MCF 10A (cell line): ENCODE measurements at regions of chr7 and their contacts with region 1.

Region 1: DNA sequence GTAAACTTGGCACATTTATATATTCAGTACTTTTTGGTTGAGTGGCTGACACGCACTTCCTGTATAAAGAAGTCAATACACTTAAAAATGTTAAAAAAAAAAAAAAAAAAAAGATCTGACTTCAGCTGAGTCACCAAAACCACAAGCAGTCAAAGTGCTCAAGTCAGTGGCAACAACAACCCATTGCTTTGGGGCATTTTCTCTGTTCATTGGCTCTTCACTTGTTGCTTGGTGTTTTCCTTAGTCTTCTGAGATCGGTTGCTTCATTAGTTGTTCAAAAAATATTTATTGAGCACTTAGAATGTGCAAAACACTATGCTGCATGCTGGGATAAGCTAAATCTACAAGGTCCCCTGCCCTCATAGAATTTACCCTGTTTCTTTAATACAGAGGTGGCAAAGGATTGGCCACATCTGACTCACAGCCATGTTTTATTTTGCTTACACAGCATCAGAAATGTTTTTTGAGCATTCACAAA is 63.7 kb downstream of the ZNRF2 start:
- DNase-seq: peak; percentile 95
- H3K4me3 Mint-ChIP-seq: peak overlapping the region; percentile 63
- H3K27ac Mint-ChIP-seq: peak overlapping the region; percentile 93
- H3K4me1 Mint-ChIP-seq: peaks cover 43% of the 10 kb centered on the region
- H3K27me3 Mint-ChIP-seq: no peaks in the 10 kb centered on the region
- CTCF ChIP-seq: no peak

Region 2: GRCh38 chr7:30134611-30135545 is 213.2 kb before region 1 on chr7 and contains the start of gene MTURN:
- CTCF ChIA-PET with region 1: no interaction called
- POLR2A ChIA-PET with region 1: interaction called, 12 read pairs
- intact Hi-C with region 1: no loop called
- DNase-seq: peak; percentile 75
- H3K4me3 Mint-ChIP-seq: peak within 1 kb of the TSS; percentile 92
- H3K27ac Mint-ChIP-seq: peak within 1 kb of the TSS; percentile 27
- H3K4me1 Mint-ChIP-seq: no peaks in the 10 kb centered on the region
- H3K27me3 Mint-ChIP-seq: no peaks in the 10 kb centered on the region
- CTCF ChIP-seq: no peak
- total RNA-seq, gene MTURN: 7.5 and 10.5 TPM in 2 replicates

Region 3: DNA sequence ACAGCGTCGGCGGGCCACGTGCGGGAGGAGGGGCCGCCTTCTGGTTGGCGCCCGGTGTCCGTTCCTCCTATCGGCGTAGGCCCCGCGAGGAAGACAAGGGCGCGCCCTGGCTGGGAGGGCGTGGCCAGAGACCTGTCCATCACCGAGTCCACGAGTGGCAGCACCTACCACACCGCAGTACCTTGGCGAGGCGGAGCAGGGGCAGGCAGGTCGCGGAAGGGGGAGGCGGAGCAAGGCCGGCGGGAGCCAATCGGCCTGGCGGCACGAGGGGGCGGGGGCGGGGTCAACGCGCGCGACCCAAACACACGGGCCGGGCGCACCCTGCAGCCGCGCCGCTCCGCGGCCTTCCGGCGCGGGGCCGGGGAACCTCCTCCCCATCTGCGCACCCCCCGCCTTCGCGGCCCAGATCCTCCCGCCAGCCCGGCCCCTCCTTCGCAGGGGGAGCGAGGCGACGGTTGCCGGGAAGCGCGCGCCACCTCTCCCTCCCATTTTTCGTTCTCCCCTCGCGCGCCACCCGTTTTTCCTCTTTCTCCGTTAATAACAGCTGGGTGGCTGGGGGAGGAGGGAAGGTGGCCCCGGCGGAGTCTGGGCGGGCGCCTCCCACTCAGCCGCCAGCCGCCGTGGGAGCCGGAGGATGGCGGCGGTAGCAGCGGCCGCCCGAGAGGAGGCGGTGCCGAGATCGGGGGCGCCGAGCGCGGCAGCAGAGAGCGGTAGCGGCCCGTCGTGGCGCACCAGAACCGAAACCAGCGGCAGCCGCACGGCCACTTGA is 63.6 kb before region 1 on chr7 and contains the start of gene ZNRF2:
- CTCF ChIA-PET with region 1: interaction called, 3 read pairs
- POLR2A ChIA-PET with region 1: interaction called, 89 read pairs
- intact Hi-C with region 1: loop called (anchors 1 kb)
- DNase-seq: peak; percentile 99
- H3K4me3 Mint-ChIP-seq: peak within 1 kb of the TSS; percentile 76
- H3K27ac Mint-ChIP-seq: peak within 1 kb of the TSS; percentile 89
- H3K4me1 Mint-ChIP-seq: peaks cover 20% of the 10 kb centered on the region
- H3K27me3 Mint-ChIP-seq: no peaks in the 10 kb centered on the region
- CTCF ChIP-seq: peak; percentile 66
- total RNA-seq, gene ZNRF2: 9.8 and 10.2 TPM in 2 replicates

Region 4: GRCh38 chr7:30308389-30308788 is 39.7 kb before region 1 on chr7:
- CTCF ChIA-PET with region 1: no interaction called
- POLR2A ChIA-PET with region 1: interaction called, 15 read pairs
- intact Hi-C with region 1: no loop called
- DNase-seq: peak; percentile 48
- H3K4me3 Mint-ChIP-seq: no peak overlapping the region
- H3K27ac Mint-ChIP-seq: no peak overlapping the region
- H3K4me1 Mint-ChIP-seq: peaks cover 21% of the 10 kb centered on the region
- H3K27me3 Mint-ChIP-seq: no peaks in the 10 kb centered on the region
- CTCF ChIP-seq: no peak

Region 5: GRCh38 chr7:30322271-30323005 is 25.7 kb before region 1 on chr7:
- CTCF ChIA-PET with region 1: interaction called, 6 read pairs
- POLR2A ChIA-PET with region 1: interaction called, 75 read pairs
- intact Hi-C with region 1: no loop called
- DNase-seq: peak; percentile 69
- H3K4me3 Mint-ChIP-seq: peak overlapping the region; percentile 59
- H3K27ac Mint-ChIP-seq: peak overlapping the region; percentile 79
- H3K4me1 Mint-ChIP-seq: peaks cover 50% of the 10 kb centered on the region
- H3K27me3 Mint-ChIP-seq: no peaks in the 10 kb centered on the region
- CTCF ChIP-seq: no peak

Region 6: GRCh38 chr7:30366606-30367005 is 18.5 kb after region 1 on chr7:
- CTCF ChIA-PET with region 1: no interaction called
- POLR2A ChIA-PET with region 1: interaction called, 10 read pairs
- intact Hi-C with region 1: no loop called
- DNase-seq: no peak
- H3K4me3 Mint-ChIP-seq: no peak overlapping the region
- H3K27ac Mint-ChIP-seq: no peak overlapping the region
- H3K4me1 Mint-ChIP-seq: peaks cover 6% of the 10 kb centered on the region
- H3K27me3 Mint-ChIP-seq: no peaks in the 10 kb centered on the region
- CTCF ChIP-seq: no peak